MCF 10A (cell line): ENCODE measurements at regions of chr12 and their contacts with region 1.

Region 1: DNA sequence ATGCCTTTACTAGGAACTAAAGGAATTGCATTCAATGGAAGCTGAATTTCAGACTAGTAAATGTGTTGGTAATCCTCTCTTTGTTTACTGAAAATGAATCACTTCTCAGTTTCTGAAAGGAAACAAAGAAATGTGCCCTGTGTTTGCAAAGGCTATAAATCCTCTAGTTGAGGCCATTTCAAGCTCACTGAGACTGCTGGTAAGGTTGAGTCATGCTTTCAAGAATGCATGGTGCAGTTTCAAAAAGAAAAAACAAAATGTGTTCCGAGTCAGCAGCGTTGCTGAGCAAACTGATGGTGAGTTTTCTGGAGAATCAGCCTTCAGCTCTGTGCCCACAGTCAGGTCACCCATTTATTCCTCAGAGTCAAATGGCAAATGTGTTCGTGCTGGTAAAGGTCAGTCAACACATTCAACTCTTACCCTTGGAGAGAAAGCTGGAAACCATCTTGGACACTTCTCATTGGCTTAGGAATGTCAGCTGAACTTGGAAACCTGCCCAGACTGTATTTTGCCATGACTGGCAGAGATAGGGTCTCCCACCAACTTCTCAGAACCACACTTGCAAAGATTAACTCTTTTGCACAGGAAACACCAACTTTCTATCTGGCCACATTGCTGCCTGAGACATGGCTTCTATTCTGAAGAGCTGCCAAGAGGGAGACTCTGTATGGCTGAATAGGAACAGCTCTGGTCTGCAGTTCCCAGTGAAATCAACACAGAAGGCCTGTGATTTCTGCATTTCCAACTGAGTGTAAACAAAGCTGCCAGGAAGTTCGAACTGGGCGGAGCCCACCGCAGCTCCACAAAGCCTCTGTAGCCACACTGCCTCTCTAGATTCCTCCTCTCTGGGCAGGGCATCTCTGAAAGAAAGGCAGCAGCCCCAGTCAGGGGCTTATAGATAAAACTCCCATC is 484.4 kb downstream of the ATP23 start:
- DNase-seq: peak; percentile 85
- H3K4me3 Mint-ChIP-seq: peak overlapping the region; percentile 37
- H3K27ac Mint-ChIP-seq: peak overlapping the region; percentile 97
- H3K4me1 Mint-ChIP-seq: peaks cover 45% of the 10 kb centered on the region
- H3K27me3 Mint-ChIP-seq: no peaks in the 10 kb centered on the region
- CTCF ChIP-seq: no peak

Region 2: GRCh38 chr12:58372298-58372697 is 53.4 kb before region 1 on chr12:
- CTCF ChIA-PET with region 1: no interaction called
- POLR2A ChIA-PET with region 1: no interaction called
- intact Hi-C with region 1: no loop called
- DNase-seq: no peak
- H3K4me3 Mint-ChIP-seq: no peak overlapping the region
- H3K27ac Mint-ChIP-seq: no peak overlapping the region
- H3K4me1 Mint-ChIP-seq: no peaks in the 10 kb centered on the region
- H3K27me3 Mint-ChIP-seq: no peaks in the 10 kb centered on the region
- CTCF ChIP-seq: no peak

Region 3: DNA sequence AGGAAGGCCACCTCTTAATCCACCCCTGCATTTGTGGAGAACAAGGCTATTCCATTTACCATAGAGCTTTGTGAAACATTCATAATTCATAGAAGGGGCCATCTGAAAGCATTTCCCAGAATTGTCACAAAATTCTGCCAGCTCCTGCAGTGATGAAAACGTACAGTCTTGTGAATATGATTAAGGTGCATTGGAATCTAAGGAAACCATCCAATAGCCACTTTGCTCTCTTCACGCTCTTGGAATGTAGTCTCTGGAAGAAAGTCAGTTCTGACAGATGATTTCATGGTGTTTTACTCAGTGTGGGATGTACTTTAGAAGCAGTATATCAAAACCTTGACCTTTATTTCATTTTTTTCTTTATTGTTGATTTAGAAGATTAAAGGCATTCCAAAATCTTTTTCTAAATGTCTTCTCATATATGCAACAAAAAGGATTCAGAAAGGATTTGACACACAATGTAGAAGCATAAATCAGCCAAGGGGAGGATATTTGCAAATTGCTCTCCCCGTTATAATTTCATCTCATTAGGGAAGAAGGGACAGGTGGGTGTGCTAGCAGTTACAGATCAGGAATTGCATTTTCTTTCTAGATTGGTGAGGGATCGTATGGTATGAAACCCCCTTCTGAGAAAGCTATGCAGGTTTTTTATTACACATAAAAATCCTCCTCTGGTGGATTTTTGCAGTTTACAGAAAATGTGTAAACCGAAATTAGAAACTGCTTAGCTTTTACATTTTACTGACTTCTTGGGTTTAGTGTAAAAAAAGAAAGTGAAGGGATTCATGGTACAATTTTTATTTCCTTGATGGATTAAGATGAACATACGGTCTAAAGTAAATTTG is 104.4 kb after region 1 on chr12:
- CTCF ChIA-PET with region 1: no interaction called
- POLR2A ChIA-PET with region 1: interaction called, 5 read pairs
- intact Hi-C with region 1: loop called (anchors 1 kb)
- DNase-seq: peak; percentile 68
- H3K4me3 Mint-ChIP-seq: peak overlapping the region; percentile 29
- H3K27ac Mint-ChIP-seq: peak overlapping the region; percentile 60
- H3K4me1 Mint-ChIP-seq: peaks cover 35% of the 10 kb centered on the region
- H3K27me3 Mint-ChIP-seq: no peaks in the 10 kb centered on the region
- CTCF ChIP-seq: no peak